Ascending aorta (tissue), 2 donors: ENCODE measurements at regions of chr1 and their contacts with region 1.

Region 1: DNA sequence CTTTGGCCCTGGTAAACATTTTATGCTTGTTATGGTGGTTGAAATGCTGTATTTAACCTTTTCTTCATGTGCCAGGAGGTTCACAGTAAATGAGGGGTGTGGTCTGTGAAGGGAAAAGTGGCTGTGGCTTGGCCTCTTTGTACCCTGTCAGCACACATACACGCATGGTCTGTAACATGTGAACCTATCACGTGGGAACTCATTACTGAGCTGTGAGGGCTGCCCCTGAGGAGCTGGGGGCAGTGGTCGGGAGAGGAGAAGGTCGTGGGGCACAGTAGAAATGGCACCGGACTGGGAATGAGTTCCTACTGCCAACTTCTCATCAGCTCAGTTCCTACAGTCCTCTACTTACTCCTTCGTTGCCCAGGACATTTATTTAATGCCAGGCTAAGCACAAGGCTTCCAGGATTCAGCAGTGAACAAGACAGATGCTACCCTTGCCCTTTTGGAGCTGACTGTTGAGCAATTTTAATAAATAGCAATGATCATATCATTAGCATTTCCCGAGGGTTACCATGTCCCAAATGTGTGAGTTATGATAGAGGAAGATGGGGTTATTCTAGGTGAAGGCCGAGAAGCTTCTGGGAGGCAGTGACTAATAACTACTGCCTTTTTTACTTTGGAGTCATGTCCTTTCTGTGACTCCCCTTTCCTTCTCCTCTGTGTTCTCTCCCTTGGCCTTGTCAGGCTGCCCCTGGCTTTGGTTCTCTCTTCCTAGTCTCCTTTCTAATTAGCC is 38.8 kb downstream of the DDR2 start:
- DNase-seq: no peak
- H3K4me3 ChIP-seq: no peak overlapping the region
- H3K27ac ChIP-seq: peak overlapping the region; percentile 74 to 78
- H3K4me1 ChIP-seq: peaks cover 2 to 21% of the 10 kb centered on the region in 2 donors
- H3K27me3 ChIP-seq: no peaks in the 10 kb centered on the region
- CTCF ChIP-seq: no peak

Region 2: GRCh38 chr1:162497723-162498500 is 173.2 kb before region 1 on chr1 and contains the start of gene UHMK1:
- intact Hi-C with region 1: no loop called
- DNase-seq: peak; percentile 71 to 97
- H3K4me3 ChIP-seq: peak within 1 kb of the TSS; percentile 85 to 99
- H3K27ac ChIP-seq: peak within 1 kb of the TSS; percentile 96 to 97
- H3K4me1 ChIP-seq: peaks cover 4 to 11% of the 10 kb centered on the region in 2 donors
- H3K27me3 ChIP-seq: no peaks in the 10 kb centered on the region
- CTCF ChIP-seq: no peak
- total RNA-seq, gene UHMK1: 13.6 TPM

Region 3: GRCh38 chr1:162690672-162691434 is 19.8 kb after region 1 on chr1:
- intact Hi-C with region 1: loop called (anchors 2 kb)
- DNase-seq: peak; percentile 36 to 93
- H3K4me3 ChIP-seq: no peak overlapping the region
- H3K27ac ChIP-seq: peak overlapping the region; percentile 52 to 70
- H3K4me1 ChIP-seq: peaks cover 8 to 24% of the 10 kb centered on the region in 2 donors
- H3K27me3 ChIP-seq: no peaks in the 10 kb centered on the region
- CTCF ChIP-seq: no peak

Region 4: DNA sequence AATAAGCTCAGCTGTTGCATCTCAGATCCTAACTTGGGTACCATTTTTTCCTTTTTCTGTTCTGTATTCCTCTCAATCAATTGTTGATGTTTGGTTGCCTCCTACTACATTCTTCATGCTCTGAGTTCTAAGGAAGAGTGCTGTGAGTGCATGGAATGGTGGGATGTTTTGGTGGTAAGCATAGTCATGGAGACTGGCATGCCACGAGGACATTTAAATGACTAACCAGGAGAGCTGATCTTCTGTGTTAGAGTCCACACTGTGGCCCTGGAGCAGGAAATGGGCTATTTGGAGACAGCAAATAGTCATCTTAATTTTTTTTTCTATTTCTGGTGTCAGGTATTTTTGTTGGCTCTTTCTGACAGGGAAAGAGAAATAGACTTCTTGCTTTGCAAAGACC is 49.9 kb after region 1 on chr1:
- intact Hi-C with region 1: loop called (anchors 5 kb)
- DNase-seq: no peak
- H3K4me3 ChIP-seq: no peak overlapping the region
- H3K27ac ChIP-seq: peak overlapping the region in 1 of 2 donors; percentile 10
- H3K4me1 ChIP-seq: peaks cover 0 to 12% of the 10 kb centered on the region in 2 donors
- H3K27me3 ChIP-seq: no peaks in the 10 kb centered on the region
- CTCF ChIP-seq: no peak

Region 5: DNA sequence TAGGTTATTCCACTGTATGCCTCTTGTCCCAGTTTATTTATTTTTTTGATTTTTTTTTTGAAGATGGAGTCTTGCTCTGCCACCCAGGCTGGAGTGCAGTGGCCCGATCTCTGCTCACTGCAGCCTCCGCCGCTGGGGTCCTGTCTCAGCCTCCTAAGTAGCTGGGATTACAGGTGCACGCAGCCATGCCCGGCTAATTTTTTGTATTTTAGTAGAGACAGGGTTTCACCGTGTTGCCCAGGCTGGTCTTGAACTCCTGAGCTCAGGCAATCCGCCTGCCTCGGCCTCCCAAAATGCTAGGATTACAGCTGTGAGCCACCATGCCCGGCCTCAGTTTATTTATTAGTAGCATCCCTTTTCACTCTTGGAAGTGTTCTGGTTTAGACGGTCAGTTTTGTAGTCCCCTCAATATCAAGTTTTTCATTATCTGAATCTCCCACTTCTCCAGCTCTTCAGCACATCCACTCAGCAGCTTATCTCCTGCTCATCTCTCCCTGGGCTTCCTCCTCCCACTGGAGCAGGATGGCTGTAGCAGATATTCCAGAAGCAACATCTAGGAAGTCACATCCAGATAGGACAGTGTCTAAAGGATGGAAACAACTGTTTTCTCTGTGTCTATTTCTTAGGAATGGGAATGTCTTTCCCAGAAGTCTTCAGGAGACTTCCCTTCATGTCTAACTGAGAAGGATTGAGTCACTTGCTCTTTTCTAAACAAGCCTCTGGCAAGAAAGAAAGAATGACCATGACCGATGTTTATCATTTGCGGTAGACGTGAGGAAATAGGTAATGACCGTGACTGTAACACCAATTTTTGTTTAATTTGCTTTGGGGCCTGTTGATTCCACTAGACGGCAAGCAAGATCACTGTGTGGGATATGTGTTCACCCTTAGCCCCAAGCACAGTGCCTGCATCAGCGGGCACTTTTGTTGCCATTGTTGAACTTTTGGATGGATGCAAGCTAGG is 175.4 kb after region 1 on chr1:
- intact Hi-C with region 1: no loop called
- DNase-seq: no peak
- H3K4me3 ChIP-seq: no peak overlapping the region
- H3K27ac ChIP-seq: no peak overlapping the region
- H3K4me1 ChIP-seq: no peaks in the 10 kb centered on the region
- H3K27me3 ChIP-seq: no peaks in the 10 kb centered on the region
- CTCF ChIP-seq: no peak